Heart right ventricle (tissue), 16 donors: ENCODE measurements at regions of chr1 and their contacts with region 1.

Region 1: DNA sequence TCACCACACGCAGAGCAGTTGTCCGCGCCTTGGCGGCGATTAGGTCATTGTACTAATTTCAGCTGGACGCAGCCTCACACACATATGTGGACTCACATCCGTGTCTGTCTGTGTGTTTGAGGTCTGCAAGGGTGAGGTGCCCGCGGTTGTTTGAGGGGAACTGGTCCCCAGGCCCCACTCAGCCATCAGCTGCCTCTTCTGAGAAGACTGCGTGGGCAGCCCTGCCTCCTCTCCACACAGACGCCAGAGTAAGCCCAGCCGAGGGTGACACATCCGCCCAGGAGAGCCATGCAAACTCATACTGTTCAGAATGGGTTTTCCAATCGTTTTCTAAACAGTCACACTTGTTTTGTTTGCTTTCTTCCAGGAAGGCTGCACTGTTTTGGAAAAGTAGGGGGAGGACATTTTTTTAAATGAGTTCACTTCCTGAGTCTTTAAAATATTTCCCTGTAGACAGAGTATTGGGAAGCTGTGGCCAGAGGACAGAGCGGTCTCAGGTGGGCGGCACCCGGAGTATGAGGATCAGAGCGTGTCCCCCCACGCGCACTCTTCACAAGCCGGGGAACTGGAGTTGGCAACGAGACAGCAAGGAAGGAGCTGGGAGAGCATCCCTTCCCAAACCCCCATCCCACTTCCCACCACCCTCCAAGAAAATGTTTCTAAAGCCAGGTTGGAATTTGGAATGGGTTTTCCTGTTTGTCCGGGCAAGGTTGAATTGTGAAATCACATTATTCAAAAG is 53.3 kb downstream of the TOMM20 start:
- DNase-seq: peak; percentile 71 to 86
- ATAC-seq: peak; percentile 70 to 85 (median 80)
- H3K4me3 ChIP-seq: peak overlapping the region in 7 of 10 donors; percentile 1 to 31 (median 10)
- H3K27ac ChIP-seq: peak overlapping the region; percentile 85 to 99 (median 96)
- H3K4me1 ChIP-seq: peaks cover 36 to 89% (median 77%) of the 10 kb centered on the region in 9 donors
- H3K27me3 ChIP-seq: no peaks in the 10 kb centered on the region
- CTCF ChIP-seq: no peak

Region 2: GRCh38 chr1:234610348-234611152 is 464.8 kb before region 1 on chr1:
- intact Hi-C with region 1: loop called in 7 of 10 experiments (anchors 2 to 5 kb)
- DNase-seq: peak; percentile 95 to 97
- ATAC-seq: peak; percentile 55 to 86 (median 80)
- H3K4me3 ChIP-seq: peak overlapping the region; percentile 27 to 70 (median 58)
- H3K27ac ChIP-seq: peak overlapping the region; percentile 95 to 100 (median 99)
- H3K4me1 ChIP-seq: peaks cover 12 to 46% (median 41%) of the 10 kb centered on the region in 9 donors
- H3K27me3 ChIP-seq: no peaks in the 10 kb centered on the region
- CTCF ChIP-seq: peak in 3 of 9 donors; percentile 2 to 12 (median 4)

Region 3: DNA sequence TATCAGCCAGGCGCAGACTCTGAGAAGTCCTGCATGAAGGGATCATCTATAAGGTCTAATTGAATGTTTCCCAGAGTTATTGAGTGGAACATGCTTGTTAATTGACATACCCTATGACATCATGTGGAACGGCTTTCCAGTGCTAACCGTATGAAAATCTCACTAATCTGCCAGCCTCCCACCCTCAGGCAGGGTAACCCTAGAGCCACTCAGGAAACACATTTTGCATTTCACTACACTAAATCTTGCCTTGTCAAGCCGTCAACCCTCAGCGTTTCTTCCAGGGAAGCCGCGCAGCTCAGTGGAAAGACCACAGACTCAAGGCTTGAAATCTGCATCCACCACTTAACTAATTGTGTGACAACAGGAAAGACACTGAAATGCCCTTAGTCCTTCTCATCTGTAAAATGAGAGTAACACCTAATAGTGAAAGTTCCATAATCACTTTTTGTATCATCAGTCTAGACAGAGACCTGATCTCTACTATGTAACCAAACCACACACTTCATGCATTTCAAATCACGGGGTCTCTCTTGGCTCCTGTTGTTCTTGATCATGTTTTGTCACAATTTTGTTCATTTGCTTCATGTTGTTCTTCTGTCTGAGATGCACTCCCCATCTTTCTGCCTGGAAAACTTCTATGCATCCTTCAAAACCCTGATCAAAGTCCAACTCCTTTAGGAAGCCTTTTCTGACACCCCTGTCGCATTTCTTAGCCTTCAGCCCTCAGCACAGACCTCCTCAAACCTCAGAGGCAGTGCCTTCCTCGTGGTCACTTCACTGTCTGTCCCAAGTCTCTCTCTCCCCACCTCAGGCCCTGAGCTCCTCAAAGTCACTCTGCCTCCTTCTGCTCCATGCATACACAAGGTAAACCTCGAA is 193.2 kb before region 1 on chr1:
- intact Hi-C with region 1: loop called in 3 of 10 experiments (anchors 2 to 10 kb)
- DNase-seq: no peak
- ATAC-seq: no peak
- H3K4me3 ChIP-seq: no peak overlapping the region
- H3K27ac ChIP-seq: no peak overlapping the region
- H3K4me1 ChIP-seq: peaks cover 7 to 48% (median 33%) of the 10 kb centered on the region in 9 donors
- H3K27me3 ChIP-seq: no peaks in the 10 kb centered on the region
- CTCF ChIP-seq: no peak

Region 4: GRCh38 chr1:234893725-234894630 is 181.4 kb before region 1 on chr1:
- intact Hi-C with region 1: loop called in 3 of 10 experiments (anchors 5 to 10 kb)
- DNase-seq: peak in 1 of 2 donors; percentile 46
- ATAC-seq: peak in 6 of 8 donors; percentile 3 to 56 (median 37)
- H3K4me3 ChIP-seq: no peak overlapping the region
- H3K27ac ChIP-seq: peak overlapping the region in 8 of 10 donors; percentile 13 to 76 (median 53)
- H3K4me1 ChIP-seq: peaks cover 7 to 63% (median 32%) of the 10 kb centered on the region in 9 donors
- H3K27me3 ChIP-seq: no peaks in the 10 kb centered on the region
- CTCF ChIP-seq: no peak

Region 5: DNA sequence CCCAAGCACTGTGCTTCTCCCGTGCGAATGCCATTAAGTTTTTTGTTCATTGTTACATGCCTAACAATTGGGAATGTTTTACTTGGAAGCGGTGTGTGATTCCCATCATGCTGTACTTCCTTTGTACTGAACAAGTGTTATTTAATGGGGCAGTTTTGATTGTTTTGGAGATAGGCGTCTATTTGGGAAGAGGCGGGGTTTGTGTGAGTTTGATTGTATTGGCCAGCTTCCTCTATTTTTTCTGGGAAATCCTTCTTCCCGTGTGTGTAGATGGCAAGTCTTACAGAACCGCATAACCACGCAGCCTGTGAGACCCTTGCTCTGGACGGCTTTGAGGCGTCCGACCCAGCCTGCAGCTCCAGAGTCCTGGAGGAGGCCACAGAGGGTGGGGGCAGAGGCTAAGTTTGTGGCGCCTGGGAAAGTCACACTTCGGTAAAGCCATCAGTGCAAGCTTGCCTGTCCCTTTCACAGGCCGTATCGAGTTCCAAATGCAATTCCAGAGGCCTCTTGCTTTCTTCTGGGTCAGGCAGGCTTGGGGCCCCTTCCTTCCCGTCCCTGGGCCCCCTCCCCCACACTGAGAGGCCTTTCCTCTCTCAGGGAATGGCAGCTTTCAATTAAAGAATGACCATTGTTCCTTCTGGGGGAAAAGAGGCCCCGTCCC is 157.0 kb before region 1 on chr1:
- intact Hi-C with region 1: loop called in 9 of 10 experiments (anchors 2 to 10 kb)
- DNase-seq: peak; percentile 54 to 72
- ATAC-seq: peak; percentile 34 to 74 (median 66)
- H3K4me3 ChIP-seq: no peak overlapping the region
- H3K27ac ChIP-seq: peak overlapping the region; percentile 80 to 97 (median 88)
- H3K4me1 ChIP-seq: peaks cover 21 to 86% (median 78%) of the 10 kb centered on the region in 9 donors
- H3K27me3 ChIP-seq: no peaks in the 10 kb centered on the region
- CTCF ChIP-seq: no peak

Region 6: GRCh38 chr1:234978397-234979295 is 96.7 kb before region 1 on chr1:
- intact Hi-C with region 1: loop called in 4 of 10 experiments (anchors 5 kb)
- DNase-seq: no peak
- ATAC-seq: peak in 7 of 8 donors; percentile 28 to 52 (median 39)
- H3K4me3 ChIP-seq: peak overlapping the region in 2 of 10 donors; percentile 9 to 47
- H3K27ac ChIP-seq: peak overlapping the region; percentile 83 to 98 (median 88)
- H3K4me1 ChIP-seq: peaks cover 15 to 93% (median 54%) of the 10 kb centered on the region in 9 donors
- H3K27me3 ChIP-seq: no peaks in the 10 kb centered on the region
- CTCF ChIP-seq: peak in 3 of 9 donors; percentile 27 to 40 (median 28)

Region 7: DNA sequence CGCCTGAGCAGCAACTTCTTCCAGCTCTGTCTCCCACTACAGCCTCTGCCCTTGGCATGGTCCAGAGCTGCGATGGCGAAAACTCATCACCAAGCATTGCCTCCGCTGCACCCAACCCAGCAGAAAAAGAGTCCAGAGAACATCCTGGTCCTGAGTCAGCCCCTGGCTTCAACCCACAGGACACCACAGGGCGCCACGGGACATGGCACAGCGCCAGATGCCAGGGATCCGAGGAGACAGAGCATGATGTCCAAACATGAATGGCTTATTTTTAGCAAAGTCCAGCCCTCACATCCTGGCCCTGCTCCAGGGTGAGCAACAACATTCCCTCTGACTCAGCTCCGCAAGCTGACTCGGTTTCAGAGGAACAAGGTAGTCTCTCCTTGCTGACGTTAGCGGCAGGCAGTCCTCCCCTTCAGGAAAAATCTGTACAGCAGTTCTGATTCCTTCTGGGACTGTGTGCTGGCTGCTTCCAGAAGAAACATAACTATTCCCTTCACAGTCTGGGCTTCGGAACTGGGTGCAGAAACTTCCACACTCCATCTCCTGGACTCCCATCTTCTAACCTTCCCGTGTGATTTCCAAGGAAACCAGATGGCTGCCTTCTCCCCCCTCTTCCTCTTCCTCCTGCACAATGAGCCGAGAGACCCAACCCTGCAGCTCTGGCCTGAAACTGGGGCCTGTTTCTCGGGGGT is 78.0 kb before region 1 on chr1:
- intact Hi-C with region 1: loop called in 7 of 10 experiments (anchors 1 to 5 kb)
- DNase-seq: peak; percentile 97
- ATAC-seq: peak; percentile 91 to 98 (median 96)
- H3K4me3 ChIP-seq: peak overlapping the region in 5 of 10 donors; percentile 6 to 13 (median 12)
- H3K27ac ChIP-seq: peak overlapping the region; percentile 87 to 95 (median 92)
- H3K4me1 ChIP-seq: peaks cover 21 to 35% (median 30%) of the 10 kb centered on the region in 9 donors
- H3K27me3 ChIP-seq: no peaks in the 10 kb centered on the region
- CTCF ChIP-seq: no peak

Region 8: DNA sequence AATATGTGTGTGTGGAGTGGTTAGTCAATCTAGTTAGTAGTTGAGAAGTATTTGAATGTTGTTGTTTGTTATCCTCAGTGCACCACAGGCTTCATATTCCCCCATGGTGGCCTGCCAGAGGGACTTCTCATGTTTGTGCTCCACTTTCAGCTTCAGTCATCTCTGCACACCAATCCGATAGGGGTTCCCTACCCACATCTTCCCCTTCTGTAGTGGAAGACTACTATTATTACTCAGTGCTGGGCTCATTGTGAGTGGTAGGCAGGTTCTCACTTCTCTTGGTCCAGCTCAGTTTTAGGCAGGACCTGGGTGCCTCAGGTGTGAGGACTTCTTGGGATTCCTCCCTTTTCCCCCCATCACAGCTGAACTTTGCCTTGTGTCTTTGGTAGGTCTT is 1914.7 kb after region 1 on chr1:
- intact Hi-C with region 1: no loop called
- DNase-seq: no peak
- ATAC-seq: no peak
- H3K4me3 ChIP-seq: no peak overlapping the region
- H3K27ac ChIP-seq: no peak overlapping the region
- H3K4me1 ChIP-seq: peaks cover 0 to 8% (median 0%) of the 10 kb centered on the region in 9 donors
- H3K27me3 ChIP-seq: no peaks in the 10 kb centered on the region
- CTCF ChIP-seq: no peak